ENCODE measurements at regions of chrX and their contacts with region 1.

Region 1: GRCh38 chrX:50579955-50580354 is 109.3 kb upstream of the DGKK start:
- DNase-seq: peak; percentile 68
- ATAC-seq: peak; percentile 81
- H3K4me3 ChIP-seq: no peak overlapping the region
- H3K27ac ChIP-seq: no peak overlapping the region
- H3K4me1 ChIP-seq: no peaks in the 10 kb centered on the region
- H3K27me3 ChIP-seq: no peaks in the 10 kb centered on the region
- CTCF ChIP-seq: peak; percentile 76
- EP300 ChIP-seq: no peak
- POLR2A ChIP-seq: no peak
- RAD21 ChIP-seq: peak; percentile 29; the same call in 1 of the 2 replicates

Region 2: DNA sequence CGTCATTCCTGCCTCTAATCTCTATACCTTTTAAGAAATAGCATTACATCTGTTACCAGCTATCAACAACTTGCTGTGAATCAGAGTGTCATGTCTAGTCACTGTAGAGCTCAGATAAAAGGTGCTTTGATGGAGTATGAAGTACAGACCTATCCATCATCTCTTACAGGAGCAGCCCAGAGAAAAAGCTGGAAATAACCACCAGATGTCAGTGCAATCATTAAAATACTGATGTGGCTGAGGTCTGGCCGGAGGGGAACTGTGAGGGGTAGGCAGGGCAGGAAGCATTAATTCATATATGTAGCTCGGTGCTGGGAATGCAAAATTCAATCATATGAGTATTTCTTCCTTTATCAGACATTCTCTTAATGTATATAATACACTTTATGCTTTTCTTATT is 479.8 kb before region 1 on chrX:
- CTCF ChIA-PET with region 1: no interaction called
- POLR2A ChIA-PET with region 1: no interaction called
- in situ Hi-C with region 1: loop called (anchors 25 kb)
- intact Hi-C with region 1: loop called (anchors 10 kb)
- DNase-seq: peak; percentile 26
- ATAC-seq: peak; percentile 79
- H3K4me3 ChIP-seq: no peak overlapping the region
- H3K27ac ChIP-seq: no peak overlapping the region
- H3K4me1 ChIP-seq: no peaks in the 10 kb centered on the region
- H3K27me3 ChIP-seq: no peaks in the 10 kb centered on the region
- CTCF ChIP-seq: peak; percentile 72
- EP300 ChIP-seq: no peak
- POLR2A ChIP-seq: no peak
- RAD21 ChIP-seq: peak; percentile 76

Region 3: GRCh38 chrX:50333308-50333707 is 246.6 kb before region 1 on chrX:
- CTCF ChIA-PET with region 1: no interaction called
- POLR2A ChIA-PET with region 1: no interaction called
- in situ Hi-C with region 1: no loop called
- intact Hi-C with region 1: loop called (anchors 10 kb)
- DNase-seq: no peak
- ATAC-seq: no peak
- H3K4me3 ChIP-seq: no peak overlapping the region
- H3K27ac ChIP-seq: no peak overlapping the region
- H3K4me1 ChIP-seq: 0 out of 2 replicates have a peak, but pooled peaks cover 9% of the 10 kb centered on the region
- H3K27me3 ChIP-seq: no peaks in the 10 kb centered on the region
- CTCF ChIP-seq: no peak
- EP300 ChIP-seq: no peak
- POLR2A ChIP-seq: no peak
- RAD21 ChIP-seq: no peak

Region 4: DNA sequence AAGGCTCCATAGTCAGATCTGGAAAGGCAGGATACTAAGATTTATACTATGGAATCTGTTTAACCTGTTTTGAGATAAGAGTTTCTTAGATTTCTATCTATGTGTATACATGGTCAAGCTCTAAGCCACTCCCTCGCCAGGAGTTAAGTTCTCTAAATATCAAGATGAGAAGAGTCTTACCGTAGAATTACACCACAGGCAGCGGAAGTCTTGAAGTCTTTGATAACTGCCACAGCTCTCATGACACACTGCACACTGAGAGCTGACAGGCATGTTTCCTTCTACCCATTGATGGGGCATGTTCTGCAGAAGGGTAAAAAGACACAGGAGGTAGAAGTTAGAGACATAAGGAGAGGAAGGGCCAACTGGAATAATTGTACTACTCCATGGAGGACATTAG is 177.1 kb before region 1 on chrX:
- CTCF ChIA-PET with region 1: no interaction called
- POLR2A ChIA-PET with region 1: no interaction called
- in situ Hi-C with region 1: no loop called
- intact Hi-C with region 1: loop called (anchors 10 kb)
- DNase-seq: no peak
- ATAC-seq: no peak
- H3K4me3 ChIP-seq: no peak overlapping the region
- H3K27ac ChIP-seq: no peak overlapping the region
- H3K4me1 ChIP-seq: no peaks in the 10 kb centered on the region
- H3K27me3 ChIP-seq: no peaks in the 10 kb centered on the region
- CTCF ChIP-seq: no peak
- EP300 ChIP-seq: no peak
- POLR2A ChIP-seq: no peak
- RAD21 ChIP-seq: no peak

Region 5: DNA sequence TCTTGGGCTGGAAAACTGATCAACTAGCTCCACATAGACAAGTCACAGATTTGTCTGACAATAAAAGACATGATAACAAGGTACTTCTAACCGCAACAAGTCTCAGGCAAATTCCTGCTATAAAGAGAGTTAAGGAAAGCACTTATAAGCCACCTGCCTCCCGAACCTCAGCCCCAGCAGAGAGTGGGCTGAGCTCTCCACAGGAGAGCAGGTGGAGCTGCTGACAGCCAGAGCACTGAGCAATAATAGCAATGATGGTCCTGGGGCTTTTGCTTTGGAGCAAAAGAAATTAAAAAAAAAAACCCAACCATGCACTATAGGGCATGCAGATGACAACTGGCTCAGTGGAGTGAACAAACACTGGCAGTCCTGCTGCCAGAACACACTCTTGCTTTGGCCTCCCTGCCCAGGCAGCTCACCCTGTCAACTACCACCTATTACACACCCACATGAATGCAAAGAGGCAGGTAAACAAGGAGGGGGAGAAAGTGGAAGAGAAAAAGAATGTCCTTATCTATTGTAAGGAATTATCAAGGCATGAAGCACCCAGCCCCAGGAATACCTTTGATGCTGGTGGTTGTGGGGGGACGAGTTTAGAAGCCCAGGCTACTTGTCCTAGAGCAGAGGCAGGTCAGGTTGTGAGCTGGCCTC is 26.5 kb after region 1 on chrX:
- CTCF ChIA-PET with region 1: no interaction called
- POLR2A ChIA-PET with region 1: no interaction called
- in situ Hi-C with region 1: no loop called
- intact Hi-C with region 1: no loop called
- DNase-seq: no peak
- ATAC-seq: no peak
- H3K4me3 ChIP-seq: no peak overlapping the region
- H3K27ac ChIP-seq: no peak overlapping the region
- H3K4me1 ChIP-seq: no peaks in the 10 kb centered on the region
- H3K27me3 ChIP-seq: no peaks in the 10 kb centered on the region
- CTCF ChIP-seq: no peak
- EP300 ChIP-seq: no peak
- POLR2A ChIP-seq: no peak
- RAD21 ChIP-seq: no peak

Measured in HepG2 (cell line).